CD14-positive monocyte (primary cell): ENCODE measurements at regions of chr1 and their contacts with region 1.

Region 1: DNA sequence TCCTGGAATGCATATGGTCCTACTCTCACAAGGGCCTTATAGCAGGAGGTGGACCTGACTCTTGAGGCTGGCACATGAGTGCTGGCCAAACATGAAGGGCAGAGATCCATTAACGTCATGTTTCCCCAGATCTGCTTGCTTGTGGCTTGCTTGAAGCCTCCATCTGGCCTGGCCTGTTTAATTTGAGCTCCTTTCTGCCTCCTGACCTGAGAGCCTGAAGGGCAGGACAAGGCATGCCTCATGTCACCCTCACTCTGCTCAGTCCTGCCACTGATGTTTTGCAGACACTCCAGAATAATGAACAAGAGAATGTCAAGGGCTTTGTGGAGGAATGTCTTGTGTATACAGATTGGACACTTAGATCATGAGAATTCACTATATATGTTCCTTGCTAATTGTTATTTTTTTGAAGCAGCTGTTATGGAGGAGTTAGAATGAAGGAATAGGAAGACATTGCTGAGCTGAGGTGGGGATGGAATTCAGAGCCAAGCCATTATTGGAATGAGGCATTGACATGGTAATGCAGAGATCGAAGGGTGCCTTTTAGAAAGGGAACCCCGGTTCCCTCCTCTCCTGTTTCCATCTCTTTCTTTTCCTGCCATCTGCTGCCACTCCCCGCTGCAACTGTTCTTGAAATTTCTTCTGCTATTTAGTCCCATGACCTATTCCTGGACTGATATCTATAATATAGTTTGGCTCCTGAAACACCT is 457.0 kb upstream of the PROX1 start:
- DNase-seq: no peak
- H3K4me3 ChIP-seq: no peak overlapping the region
- H3K4me3 Mint-ChIP-seq: no peak overlapping the region
- H3K27ac ChIP-seq: no peak overlapping the region
- H3K27ac Mint-ChIP-seq: no peak overlapping the region
- H3K4me1 ChIP-seq: no peaks in the 10 kb centered on the region
- H3K4me1 Mint-ChIP-seq: no peaks in the 10 kb centered on the region
- H3K27me3 ChIP-seq: no peaks in the 10 kb centered on the region
- H3K27me3 Mint-ChIP-seq: peaks cover 0 to 3% (median 0%) of the 10 kb centered on the region in 3 donors
- CTCF ChIP-seq: no peak

Region 2: DNA sequence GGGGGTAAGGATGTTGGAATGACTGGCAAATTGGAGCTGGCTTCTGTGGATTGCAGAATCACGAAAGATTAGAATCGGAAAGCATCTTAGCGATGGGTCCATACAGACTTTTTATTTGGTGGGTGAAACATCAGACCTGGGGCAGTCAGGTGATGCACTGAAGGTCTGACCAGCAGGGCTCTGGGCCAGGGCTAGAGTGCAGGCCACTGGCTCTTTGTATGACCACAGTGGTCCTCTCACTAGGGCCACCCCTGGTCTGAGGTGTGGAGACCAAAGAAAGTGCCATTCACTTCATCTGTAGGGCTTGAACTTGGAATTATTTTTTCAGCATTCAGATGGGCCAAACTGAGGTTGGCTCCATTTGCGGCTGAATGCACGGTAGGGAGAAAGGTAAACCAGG is 173.4 kb before region 1 on chr1:
- intact Hi-C with region 1: no loop called
- DNase-seq: no peak
- H3K4me3 ChIP-seq: no peak overlapping the region
- H3K4me3 Mint-ChIP-seq: no peak overlapping the region
- H3K27ac ChIP-seq: no peak overlapping the region
- H3K27ac Mint-ChIP-seq: no peak overlapping the region
- H3K4me1 ChIP-seq: no peaks in the 10 kb centered on the region
- H3K4me1 Mint-ChIP-seq: no peaks in the 10 kb centered on the region
- H3K27me3 ChIP-seq: no peaks in the 10 kb centered on the region
- H3K27me3 Mint-ChIP-seq: peaks cover 2 to 7% (median 6%) of the 10 kb centered on the region in 3 donors
- CTCF ChIP-seq: no peak

Region 3: DNA sequence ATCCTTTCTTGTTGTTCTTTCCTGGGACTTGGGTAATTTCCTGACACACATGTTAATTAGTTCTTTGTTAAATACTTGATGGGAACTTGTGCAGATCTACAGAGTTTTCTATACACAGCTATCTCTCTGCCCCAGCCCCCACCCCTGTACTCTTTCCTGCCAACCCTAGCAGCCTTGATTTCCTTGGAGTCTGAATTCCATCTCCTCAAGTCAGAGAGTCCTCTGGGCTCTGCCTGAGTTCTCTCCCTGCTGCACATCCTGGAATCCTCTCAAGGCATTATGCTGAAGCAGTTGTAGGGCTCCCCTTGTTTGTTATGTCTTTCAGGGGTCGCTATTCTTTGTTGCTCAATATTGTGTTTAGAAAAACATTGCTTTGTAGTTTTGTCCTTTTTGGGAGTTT is 95.1 kb before region 1 on chr1:
- intact Hi-C with region 1: no loop called
- DNase-seq: no peak
- H3K4me3 ChIP-seq: no peak overlapping the region
- H3K4me3 Mint-ChIP-seq: peak overlapping the region in 1 of 2 donors; percentile 8
- H3K27ac ChIP-seq: no peak overlapping the region
- H3K27ac Mint-ChIP-seq: no peak overlapping the region
- H3K4me1 ChIP-seq: no peaks in the 10 kb centered on the region
- H3K4me1 Mint-ChIP-seq: peaks cover 3% of the 10 kb centered on the region
- H3K27me3 ChIP-seq: no peaks in the 10 kb centered on the region
- H3K27me3 Mint-ChIP-seq: peaks cover 1 to 3% (median 2%) of the 10 kb centered on the region in 3 donors
- CTCF ChIP-seq: no peak

Region 4: GRCh38 chr1:213474054-213474453 is 56.7 kb before region 1 on chr1:
- intact Hi-C with region 1: loop called in 1 of 2 experiments (anchors 10 kb)
- DNase-seq: no peak
- H3K4me3 ChIP-seq: no peak overlapping the region
- H3K4me3 Mint-ChIP-seq: no peak overlapping the region
- H3K27ac ChIP-seq: no peak overlapping the region
- H3K27ac Mint-ChIP-seq: no peak overlapping the region
- H3K4me1 ChIP-seq: no peaks in the 10 kb centered on the region
- H3K4me1 Mint-ChIP-seq: no peaks in the 10 kb centered on the region
- H3K27me3 ChIP-seq: no peaks in the 10 kb centered on the region
- H3K27me3 Mint-ChIP-seq: peaks cover 0 to 1% (median 1%) of the 10 kb centered on the region in 3 donors
- CTCF ChIP-seq: no peak